IMR-90 (cell line): ENCODE measurements at regions of chr5 and their contacts with region 1.

Region 1: GRCh38 chr5:150573867-150574817 is 66.2 kb downstream of the NDST1 start:
- DNase-seq: no peak
- ATAC-seq: peak; percentile 13; the same call in 1 of the 2 replicates
- H3K4me3 ChIP-seq: no peak overlapping the region
- H3K27ac ChIP-seq: no peak overlapping the region; the same call in 1 of the 2 replicates
- H3K4me1 ChIP-seq: peaks cover 8% of the 10 kb centered on the region
- H3K27me3 ChIP-seq: peaks cover under 1% of the 10 kb centered on the region; the same call in 1 of the 2 replicates
- CTCF ChIP-seq: peak; percentile 17; the same call in 1 of the 2 replicates
- POLR2A ChIP-seq: no peak
- RAD21 ChIP-seq: no peak

Region 2: GRCh38 chr5:150649101-150650023 is 75.2 kb after region 1 on chr5:
- CTCF ChIA-PET with region 1: no interaction called
- POLR2A ChIA-PET with region 1: no interaction called
- dilution Hi-C with region 1: no loop called
- in situ Hi-C with region 1: no loop called
- intact Hi-C with region 1: no loop called
- DNase-seq: no peak
- ATAC-seq: no peak
- H3K4me3 ChIP-seq: no peak overlapping the region
- H3K27ac ChIP-seq: no peak overlapping the region
- H3K4me1 ChIP-seq: peaks cover 31% of the 10 kb centered on the region
- H3K27me3 ChIP-seq: no peaks in the 10 kb centered on the region
- CTCF ChIP-seq: no peak
- POLR2A ChIP-seq: no peak
- RAD21 ChIP-seq: no peak

Region 3: DNA sequence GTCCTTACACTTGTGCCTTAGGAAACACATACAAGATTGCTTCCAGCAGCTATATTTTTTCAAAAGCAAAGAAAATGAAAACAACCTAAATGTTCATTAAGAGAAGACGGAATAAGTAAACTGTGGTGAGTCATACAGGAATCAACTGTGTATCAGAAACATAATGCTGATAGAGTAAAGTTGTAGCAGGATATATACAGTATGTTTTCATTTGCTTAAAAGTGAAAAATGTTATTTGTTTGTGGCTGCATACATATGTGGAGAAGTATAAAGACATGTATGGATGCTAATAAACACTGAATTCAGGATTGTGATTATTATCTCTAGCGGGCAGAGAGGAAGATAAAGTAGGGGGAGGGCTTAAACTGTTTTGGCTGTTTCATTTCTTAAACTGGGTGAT is 176.3 kb after region 1 on chr5:
- CTCF ChIA-PET with region 1: no interaction called
- POLR2A ChIA-PET with region 1: interaction called, 15 read pairs
- dilution Hi-C with region 1: no loop called
- in situ Hi-C with region 1: no loop called
- intact Hi-C with region 1: no loop called
- DNase-seq: peak; percentile 17
- ATAC-seq: peak; percentile 77
- H3K4me3 ChIP-seq: no peak overlapping the region
- H3K27ac ChIP-seq: no peak overlapping the region
- H3K4me1 ChIP-seq: no peaks in the 10 kb centered on the region; the same call in 1 of the 2 replicates
- H3K27me3 ChIP-seq: no peaks in the 10 kb centered on the region
- CTCF ChIP-seq: no peak
- POLR2A ChIP-seq: no peak
- RAD21 ChIP-seq: no peak